ENCODE measurements at regions of chr6 and their contacts with region 1.

Region 1: GRCh38 chr6:97029552-97029951 is 105.0 kb downstream of the KLHL32 start:
- DNase-seq: no peak
- ATAC-seq: no peak
- H3K4me3 ChIP-seq: no peak overlapping the region
- H3K4me3 Mint-ChIP-seq: no peak overlapping the region
- H3K27ac ChIP-seq: no peak overlapping the region
- H3K27ac Mint-ChIP-seq: no peak overlapping the region
- H3K4me1 ChIP-seq: no peaks in the 10 kb centered on the region
- H3K4me1 Mint-ChIP-seq: no peaks in the 10 kb centered on the region
- H3K27me3 ChIP-seq: no peaks in the 10 kb centered on the region
- H3K27me3 Mint-ChIP-seq: no peaks in the 10 kb centered on the region

Region 2: GRCh38 chr6:96547654-96548053 is 481.9 kb before region 1 on chr6:
- CTCF ChIA-PET with region 1: no interaction called
- POLR2A ChIA-PET with region 1: interaction called in 1 of 2 experiments, 14 read pairs
- DNase-seq: no peak
- ATAC-seq: no peak
- H3K4me3 ChIP-seq: no peak overlapping the region
- H3K4me3 Mint-ChIP-seq: no peak overlapping the region
- H3K27ac ChIP-seq: no peak overlapping the region
- H3K27ac Mint-ChIP-seq: no peak overlapping the region
- H3K4me1 ChIP-seq: no peaks in the 10 kb centered on the region
- H3K4me1 Mint-ChIP-seq: no peaks in the 10 kb centered on the region
- H3K27me3 ChIP-seq: no peaks in the 10 kb centered on the region
- H3K27me3 Mint-ChIP-seq: no peaks in the 10 kb centered on the region

Measured in T-cell (primary cell).